ENCODE measurements at regions of chr2 and their contacts with region 1.

Region 1: GRCh38 chr2:160406591-160407392 is 86.8 kb downstream of the RBMS1 start:
- DNase-seq: peak; percentile 87
- ATAC-seq: peak; percentile 70
- H3K4me3 Mint-ChIP-seq: peak overlapping the region; percentile 95
- H3K27ac Mint-ChIP-seq: peak overlapping the region; percentile 92
- H3K4me1 Mint-ChIP-seq: peaks cover 71% of the 10 kb centered on the region
- H3K27me3 Mint-ChIP-seq: no peaks in the 10 kb centered on the region
- CTCF ChIP-seq: no peak

Region 2: DNA sequence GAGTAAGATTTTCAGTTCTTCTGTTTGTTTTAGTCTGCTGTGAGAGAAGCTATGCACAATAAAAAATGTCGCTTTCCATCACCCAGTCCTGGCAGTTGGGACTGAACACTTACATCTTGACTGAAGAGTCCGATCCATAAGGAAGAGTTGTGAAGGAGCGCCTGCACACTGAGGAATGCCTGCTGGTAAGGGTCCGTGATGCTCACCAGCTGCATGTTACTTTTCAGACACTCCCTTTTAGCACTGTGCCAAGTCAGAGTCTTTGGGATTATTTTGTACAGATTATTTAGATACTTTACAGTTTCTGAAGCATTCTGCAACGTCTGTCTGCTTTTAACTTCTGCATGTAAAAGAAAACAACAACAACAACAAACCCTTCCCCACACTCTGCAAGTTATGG is 566.2 kb before region 1 on chr2:
- CTCF ChIA-PET with region 1: no interaction called
- POLR2A ChIA-PET with region 1: no interaction called
- intact Hi-C with region 1: no loop called
- DNase-seq: no peak
- ATAC-seq: no peak
- H3K4me3 Mint-ChIP-seq: no peak overlapping the region
- H3K27ac Mint-ChIP-seq: no peak overlapping the region
- H3K4me1 Mint-ChIP-seq: no peaks in the 10 kb centered on the region
- H3K27me3 Mint-ChIP-seq: no peaks in the 10 kb centered on the region
- CTCF ChIP-seq: no peak

Region 3: DNA sequence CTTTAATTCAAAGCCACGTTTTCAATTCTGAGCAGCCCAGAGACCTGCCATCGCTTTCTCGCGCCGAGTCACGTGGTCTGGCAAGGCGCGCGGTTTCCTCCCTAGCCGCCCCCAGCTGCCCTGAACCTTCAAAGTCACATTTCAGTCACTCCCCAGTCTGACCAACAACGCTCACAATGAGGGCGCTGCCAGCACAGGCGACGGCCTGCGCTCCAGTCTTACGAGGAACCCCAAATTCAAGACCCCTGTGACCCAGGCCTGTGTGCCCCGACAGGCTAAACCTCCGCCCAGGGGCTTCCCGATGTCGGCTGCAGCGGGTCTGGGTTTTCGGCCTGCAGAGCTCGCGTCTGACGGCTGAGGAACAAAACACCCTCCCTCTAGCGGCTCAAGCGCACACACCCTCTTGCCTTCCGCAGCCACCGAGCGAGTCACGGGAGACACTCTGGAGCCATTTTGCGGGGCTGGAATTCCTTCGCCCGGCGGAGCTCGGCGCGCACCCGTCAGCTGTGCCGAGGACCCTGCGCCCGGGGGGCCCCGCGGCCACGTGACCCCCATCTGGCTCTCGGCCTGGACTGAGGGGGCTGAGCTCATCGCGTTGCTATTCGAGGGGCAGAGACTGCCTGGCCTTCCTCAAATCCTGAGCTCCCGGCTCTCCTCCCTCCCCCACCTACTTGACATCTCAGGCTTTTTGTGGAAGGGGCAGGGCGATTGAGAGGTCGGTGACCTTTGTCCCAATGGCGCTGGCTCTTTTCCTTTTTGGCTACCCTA is 136.8 kb before region 1 on chr2:
- CTCF ChIA-PET with region 1: no interaction called
- POLR2A ChIA-PET with region 1: interaction called, 7 read pairs
- intact Hi-C with region 1: loop called (anchors 5 kb)
- DNase-seq: peak; percentile 80
- ATAC-seq: peak; percentile 73
- H3K4me3 Mint-ChIP-seq: peak overlapping the region; percentile 63
- H3K27ac Mint-ChIP-seq: peak overlapping the region; percentile 84
- H3K4me1 Mint-ChIP-seq: peaks cover 45% of the 10 kb centered on the region
- H3K27me3 Mint-ChIP-seq: peaks cover 2% of the 10 kb centered on the region
- CTCF ChIP-seq: peak; percentile 71

Region 4: DNA sequence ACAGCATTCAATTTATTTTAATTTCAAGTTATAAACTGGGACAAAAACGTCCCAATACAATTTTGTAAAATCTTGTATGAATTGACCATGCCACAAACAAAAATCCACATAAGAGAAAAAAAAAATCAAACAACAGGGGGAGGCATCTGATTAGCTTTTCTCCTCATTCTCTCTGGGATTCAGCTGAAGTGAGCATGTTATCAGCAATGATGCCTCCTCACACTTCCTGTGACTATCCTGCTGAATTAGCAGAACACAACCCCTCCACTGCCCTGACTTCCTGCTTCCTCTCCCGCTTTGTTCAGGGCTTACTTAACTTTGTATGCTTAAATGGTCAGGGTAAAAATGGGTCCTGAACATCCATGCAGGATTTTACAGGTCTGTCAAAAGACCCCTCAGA is 74.5 kb before region 1 on chr2:
- CTCF ChIA-PET with region 1: interaction called, 4 read pairs
- POLR2A ChIA-PET with region 1: interaction called, 7 read pairs
- intact Hi-C with region 1: loop called (anchors 5 kb)
- DNase-seq: peak; percentile 22
- ATAC-seq: peak; percentile 45
- H3K4me3 Mint-ChIP-seq: peak overlapping the region; percentile 11
- H3K27ac Mint-ChIP-seq: peak overlapping the region; percentile 76
- H3K4me1 Mint-ChIP-seq: peaks cover 91% of the 10 kb centered on the region
- H3K27me3 Mint-ChIP-seq: no peaks in the 10 kb centered on the region
- CTCF ChIP-seq: no peak

Region 5: DNA sequence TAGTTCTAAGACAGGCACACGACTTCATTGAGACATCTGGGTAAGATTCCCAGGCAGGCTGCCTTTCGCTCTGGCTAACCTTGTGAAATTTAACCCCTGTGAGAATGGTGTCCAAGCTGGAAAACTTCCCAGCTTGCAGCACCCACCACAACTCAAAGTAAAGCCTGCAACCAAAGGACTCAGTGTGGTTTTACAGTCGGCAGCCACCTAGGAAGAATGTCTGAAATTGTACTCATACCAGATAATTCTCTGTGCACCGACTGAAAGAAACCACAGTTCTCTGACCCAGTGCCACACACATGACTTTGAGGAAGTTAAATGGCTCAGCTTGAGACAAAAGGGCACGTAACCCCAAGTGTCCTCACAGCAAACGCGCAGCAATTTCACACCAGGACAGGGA is 38.9 kb before region 1 on chr2:
- CTCF ChIA-PET with region 1: no interaction called
- POLR2A ChIA-PET with region 1: no interaction called
- intact Hi-C with region 1: no loop called
- DNase-seq: peak; percentile 52
- ATAC-seq: peak; percentile 82
- H3K4me3 Mint-ChIP-seq: peak overlapping the region; percentile 23
- H3K27ac Mint-ChIP-seq: peak overlapping the region; percentile 36
- H3K4me1 Mint-ChIP-seq: peaks cover 73% of the 10 kb centered on the region
- H3K27me3 Mint-ChIP-seq: no peaks in the 10 kb centered on the region
- CTCF ChIP-seq: no peak

Region 6: DNA sequence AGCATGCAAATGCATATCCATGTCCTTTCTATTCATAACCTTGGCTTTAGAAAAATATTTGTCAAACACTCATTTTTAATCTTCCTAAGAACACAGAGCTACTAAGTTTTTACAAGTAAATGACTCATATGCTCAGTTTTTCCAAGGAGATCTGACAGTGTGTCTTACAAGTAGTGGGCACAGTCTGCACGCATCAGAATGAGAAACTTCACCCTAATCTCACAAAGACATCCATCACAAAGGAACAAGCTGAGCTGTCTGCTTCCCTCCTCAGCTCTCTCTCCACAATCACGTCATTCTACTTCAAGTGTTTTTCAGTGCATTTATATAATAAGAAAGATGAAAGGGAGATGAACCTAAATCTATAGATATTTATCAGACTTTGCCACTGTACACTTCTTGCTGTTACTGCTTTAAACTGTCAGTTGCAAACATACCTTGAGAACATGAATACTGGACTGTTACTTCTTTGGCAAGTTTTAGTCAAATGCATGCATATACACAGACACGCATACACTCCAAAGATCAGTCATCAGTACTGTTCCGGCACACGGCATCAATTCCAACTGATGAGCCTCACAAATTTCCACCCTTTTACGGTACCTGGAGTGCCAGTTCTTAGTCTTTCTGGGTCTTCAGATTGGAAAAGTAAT is 11.1 kb after region 1 on chr2:
- CTCF ChIA-PET with region 1: interaction called, 6 read pairs
- POLR2A ChIA-PET with region 1: interaction called, 18 read pairs
- intact Hi-C with region 1: no loop called
- DNase-seq: peak; percentile 48
- ATAC-seq: peak; percentile 90
- H3K4me3 Mint-ChIP-seq: peak overlapping the region; percentile 11
- H3K27ac Mint-ChIP-seq: peak overlapping the region; percentile 57
- H3K4me1 Mint-ChIP-seq: peaks cover 67% of the 10 kb centered on the region
- H3K27me3 Mint-ChIP-seq: no peaks in the 10 kb centered on the region
- CTCF ChIP-seq: no peak

Region 7: DNA sequence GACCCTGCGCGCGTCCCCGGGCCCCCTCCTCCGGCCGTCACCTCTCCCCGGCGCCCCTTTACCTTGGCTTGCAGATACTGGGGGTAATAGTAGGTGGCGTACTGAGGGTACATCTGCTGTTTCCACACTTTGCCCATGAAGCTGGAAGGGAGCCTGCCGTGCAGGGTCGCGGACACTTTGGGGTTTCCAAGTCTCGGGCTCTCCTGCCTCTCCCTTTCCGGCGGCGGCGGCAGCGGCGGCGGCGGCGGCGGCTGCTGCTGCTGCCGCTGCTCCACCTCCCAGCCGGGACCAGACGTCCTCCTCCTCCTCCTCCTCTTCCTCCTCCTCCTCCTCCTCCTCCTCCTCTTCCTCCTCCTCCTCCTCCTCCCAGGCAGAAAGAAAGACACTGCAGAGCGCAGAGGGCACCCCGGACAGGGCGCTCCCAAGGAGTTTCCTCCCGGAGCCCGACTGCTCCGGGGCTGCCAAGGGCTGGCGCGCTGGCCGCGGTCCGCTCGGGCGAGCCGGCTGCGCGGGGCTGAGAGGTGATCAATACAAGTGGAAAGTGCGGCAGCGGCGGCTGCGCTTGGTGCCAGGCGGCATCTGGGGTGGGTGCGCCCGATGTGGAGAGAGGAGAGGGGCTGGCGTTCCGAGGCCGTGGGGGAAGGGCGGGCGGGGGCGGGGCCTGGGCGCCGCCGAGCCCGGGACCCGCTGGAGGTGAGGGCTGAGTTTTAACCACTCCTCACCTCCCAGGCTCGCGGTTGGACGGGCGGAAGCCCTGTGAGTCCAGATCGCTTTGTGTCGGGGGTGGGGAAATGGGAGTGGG is 86.6 kb after region 1 on chr2 and contains the start of gene RBMS1:
- CTCF ChIA-PET with region 1: interaction called, 3 read pairs
- POLR2A ChIA-PET with region 1: interaction called, 9 read pairs
- intact Hi-C with region 1: loop called (anchors 5 kb)
- DNase-seq: peak; percentile 56
- ATAC-seq: peak; percentile 32
- H3K4me3 Mint-ChIP-seq: peak within 1 kb of the TSS; percentile 93
- H3K27ac Mint-ChIP-seq: peak within 1 kb of the TSS; percentile 94
- H3K4me1 Mint-ChIP-seq: peaks cover 43% of the 10 kb centered on the region
- H3K27me3 Mint-ChIP-seq: no peaks in the 10 kb centered on the region
- CTCF ChIP-seq: no peak
- total RNA-seq, gene RBMS1: 35.8 to 38.6 TPM